Activated CD4-positive, alpha-beta memory T cell treated with anti-CD3 and anti-CD28 coated beads, Interleukin-2, amount 10 ng/mL, durations not matched to agents 7 days and 5 days (primary cell): ENCODE measurements at regions of chr6 and their contacts with region 1.

Region 1: DNA sequence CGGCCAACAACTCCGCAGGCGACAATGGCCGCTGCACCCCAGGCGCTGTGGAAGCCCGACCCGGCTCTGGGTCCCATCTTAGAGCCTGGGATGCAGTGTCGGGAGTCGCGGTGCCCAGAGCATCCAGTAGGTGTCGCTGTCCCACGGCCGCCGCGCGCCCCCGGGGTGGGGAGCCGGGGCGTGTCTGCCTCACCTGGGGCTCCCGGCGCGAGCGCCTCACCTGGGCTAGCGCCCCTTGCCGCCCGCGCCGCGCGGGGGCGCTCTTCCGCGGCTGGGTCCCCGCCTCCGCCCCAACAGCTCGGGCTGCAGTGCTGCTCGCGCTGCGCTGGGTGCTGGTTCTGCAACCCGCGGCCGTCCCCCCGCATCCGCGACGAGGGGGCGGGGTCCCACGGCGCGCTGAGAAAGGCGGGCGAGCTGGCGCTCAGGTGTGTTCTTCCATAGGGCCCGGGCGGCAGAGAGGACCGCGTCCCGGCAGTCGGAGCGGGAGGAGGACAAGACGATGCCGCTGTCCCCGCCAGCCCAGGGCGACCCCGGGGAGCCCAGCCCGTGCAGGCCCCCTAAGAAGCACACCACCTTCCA is at the start of gene CRYBG1:
- DNase-seq: peak; percentile 69
- H3K4me3 Mint-ChIP-seq: peak within 1 kb of the TSS; percentile 62
- H3K27ac Mint-ChIP-seq: no peak within 1 kb of the TSS
- H3K4me1 Mint-ChIP-seq: peaks cover 12% of the 10 kb centered on the region
- H3K27me3 Mint-ChIP-seq: peaks cover 57% of the 10 kb centered on the region
- total RNA-seq, gene CRYBG1: 59.2 TPM

Region 2: DNA sequence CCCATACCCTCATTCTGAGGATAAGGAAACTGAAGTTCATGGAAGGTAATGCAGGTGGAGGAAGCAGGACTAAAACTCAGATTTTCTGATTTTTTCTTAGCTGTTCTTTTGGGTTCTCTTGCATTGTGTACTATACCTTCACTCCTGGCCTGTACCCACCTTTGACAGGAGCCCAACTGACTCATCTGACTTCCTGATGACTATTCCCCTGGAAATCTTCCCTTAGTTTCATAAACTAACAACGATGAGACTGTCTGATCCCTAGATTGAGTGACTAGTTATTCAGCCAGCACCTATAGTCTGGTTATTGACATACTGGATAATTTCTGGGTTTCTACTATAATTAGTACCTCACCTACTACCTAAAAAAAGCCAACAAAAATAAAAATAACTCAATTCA is 10.1 kb after region 1 on chr6:
- CTCF ChIA-PET with region 1: interaction called, 15 read pairs
- POLR2A ChIA-PET with region 1: no interaction called
- DNase-seq: no peak
- H3K4me3 Mint-ChIP-seq: no peak overlapping the region
- H3K27ac Mint-ChIP-seq: no peak overlapping the region
- H3K4me1 Mint-ChIP-seq: peaks cover 13% of the 10 kb centered on the region
- H3K27me3 Mint-ChIP-seq: peaks cover 13% of the 10 kb centered on the region

Region 3: DNA sequence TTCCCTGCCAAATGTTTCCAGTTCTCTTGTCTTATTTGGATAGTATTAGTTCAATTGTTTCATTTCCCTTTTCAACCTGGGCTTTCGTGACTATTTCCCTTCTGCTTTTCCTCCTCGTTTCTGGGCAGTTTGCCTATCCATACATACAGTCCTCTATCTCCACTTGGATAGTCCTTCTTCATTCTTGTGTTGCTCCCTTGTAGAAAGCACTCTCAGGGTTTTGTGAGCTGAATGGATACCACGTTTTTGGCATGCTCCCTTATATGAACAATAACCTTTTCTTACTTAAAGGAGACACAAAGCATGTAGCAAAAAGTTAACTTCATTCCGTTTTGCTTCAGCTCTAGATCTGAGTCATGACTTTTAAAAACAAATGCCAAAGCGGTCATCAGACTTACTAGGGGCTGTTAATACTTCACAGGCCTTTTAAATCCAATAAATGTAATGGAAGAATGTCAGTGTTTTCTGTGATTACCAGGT is 16.6 kb after region 1 on chr6:
- CTCF ChIA-PET with region 1: interaction called, 15 read pairs
- POLR2A ChIA-PET with region 1: no interaction called
- DNase-seq: no peak
- H3K4me3 Mint-ChIP-seq: no peak overlapping the region
- H3K27ac Mint-ChIP-seq: no peak overlapping the region
- H3K4me1 Mint-ChIP-seq: peaks cover 28% of the 10 kb centered on the region
- H3K27me3 Mint-ChIP-seq: peaks cover 7% of the 10 kb centered on the region